ENCODE measurements at regions of chr1 and their contacts with region 1.

Region 1: GRCh38 chr1:229230140-229230892 is 40.6 kb upstream of the RAB4A start:
- DNase-seq: no peak
- ATAC-seq: no peak

Region 2: GRCh38 chr1:228669242-228669585 is 561.1 kb before region 1 on chr1:
- intact Hi-C with region 1: loop called in 1 of 2 experiments (anchors 10 kb)
- DNase-seq: no peak
- ATAC-seq: no peak

Region 3: GRCh38 chr1:229553621-229554130 is 323.4 kb after region 1 on chr1:
- intact Hi-C with region 1: no loop called
- DNase-seq: no peak
- ATAC-seq: no peak

Region 4: GRCh38 chr1:230054092-230054749 is 823.9 kb after region 1 on chr1:
- intact Hi-C with region 1: no loop called
- DNase-seq: no peak
- ATAC-seq: no peak